A549 (cell line): ENCODE measurements at regions of chr19 and their contacts with region 1.

Region 1: DNA sequence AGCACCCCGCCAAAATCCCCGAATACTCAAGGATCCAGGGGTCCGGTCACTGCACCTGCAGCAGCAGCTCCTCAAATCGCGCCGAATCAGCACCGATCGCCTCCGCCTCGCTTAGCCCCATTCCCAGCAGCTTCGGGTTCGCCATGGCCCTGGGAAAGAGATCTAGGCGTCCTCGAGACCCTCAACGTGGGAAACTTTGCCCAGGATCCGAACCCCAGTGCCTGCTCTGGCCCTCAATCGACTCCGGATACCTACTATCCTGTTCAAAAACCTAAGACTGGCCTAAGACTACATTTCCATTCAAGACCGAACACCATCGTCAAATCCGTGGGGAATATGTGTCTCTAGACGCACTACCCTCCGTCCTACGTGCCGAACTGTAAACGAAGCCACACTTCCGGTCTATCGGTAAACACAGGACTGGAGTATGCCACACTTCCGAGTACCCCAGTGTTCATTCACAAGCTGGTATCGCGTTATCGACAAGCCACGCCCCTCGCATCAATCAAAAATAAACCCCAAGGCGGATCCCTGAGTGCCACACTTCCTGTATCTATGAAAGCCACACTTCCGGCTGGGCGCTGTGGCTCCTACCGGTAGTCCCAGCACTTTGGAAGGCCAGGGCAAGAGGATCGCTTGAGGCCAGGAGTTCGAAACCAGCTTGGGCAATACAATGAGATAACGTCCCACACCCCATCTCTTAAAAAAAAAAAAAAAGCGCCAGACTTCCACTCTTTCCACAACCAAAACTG is at the start of gene PIH1D1:
- DNase-seq: peak; percentile 99 to 100
- ATAC-seq: peak; percentile 76 to 79
- H3K4me3 ChIP-seq: peak within 1 kb of the TSS; percentile 90
- H3K27ac ChIP-seq: peak within 1 kb of the TSS; percentile 93 to 99
- H3K4me1 ChIP-seq: peaks cover 25% of the 10 kb centered on the region
- CTCF ChIP-seq: no peak
- EP300 ChIP-seq: no peak
- POLR2A ChIP-seq: peak; percentile 85
- RAD21 ChIP-seq: no peak
- polyA plus RNA-seq, gene PIH1D1: 74.1 and 89.7 TPM in 2 replicates

Region 2: DNA sequence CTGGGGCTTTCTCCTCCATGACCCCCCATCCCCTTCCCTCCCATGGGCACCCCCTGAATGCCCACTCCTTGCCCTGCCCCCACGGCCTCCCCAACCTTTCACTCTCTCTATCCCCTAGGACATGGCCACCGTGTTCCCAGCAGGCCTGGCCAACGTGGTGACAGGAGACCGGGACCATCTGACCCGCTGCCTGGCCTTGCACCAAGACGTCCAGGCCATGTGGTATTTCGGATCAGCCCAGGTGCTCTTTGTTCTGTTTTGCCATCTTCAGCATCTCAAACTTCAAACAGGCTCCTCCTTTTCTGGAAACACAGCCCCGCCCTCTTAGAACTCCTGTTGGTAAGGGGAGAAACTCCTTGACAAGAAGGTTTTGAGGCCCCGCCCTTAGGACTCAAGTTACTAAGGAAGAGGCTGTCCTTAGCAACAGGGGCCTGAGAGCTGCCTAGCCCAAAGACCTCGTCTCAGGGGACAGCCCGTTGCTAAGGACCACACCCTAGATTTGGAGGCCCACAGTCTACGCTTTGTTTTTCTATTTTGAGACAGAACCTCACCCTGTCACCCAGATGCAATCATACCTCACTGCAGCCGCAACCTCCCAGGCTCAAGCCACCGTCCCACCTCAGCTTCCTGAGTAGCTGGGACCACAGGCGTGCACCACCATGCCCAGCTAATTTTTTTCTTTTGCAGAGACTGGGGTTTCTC is 17.3 kb after region 1 on chr19:
- CTCF ChIA-PET with region 1: interaction called, 87 read pairs
- POLR2A ChIA-PET with region 1: interaction called, 11 read pairs
- DNase-seq: peak in 1 of 2 experiments; percentile 82
- ATAC-seq: peak; percentile 30 to 61; a peak in 4 of 6 replicates
- H3K4me3 ChIP-seq: no peak overlapping the region
- H3K27ac ChIP-seq: no peak overlapping the region
- H3K4me1 ChIP-seq: peaks cover 7% of the 10 kb centered on the region; the same call in 2 of the 3 replicates
- CTCF ChIP-seq: no peak
- EP300 ChIP-seq: no peak
- POLR2A ChIP-seq: no peak
- RAD21 ChIP-seq: no peak

Region 3: GRCh38 chr19:49497047-49497788 is 45.6 kb after region 1 on chr19:
- CTCF ChIA-PET with region 1: interaction called, 3 read pairs
- POLR2A ChIA-PET with region 1: interaction called, 10 read pairs
- DNase-seq: peak; percentile 77 to 79
- ATAC-seq: peak in 1 of 2 experiments; percentile 7; a peak in 2 of 6 replicates
- H3K4me3 ChIP-seq: peak overlapping the region; percentile 97
- H3K27ac ChIP-seq: peak overlapping the region; percentile 93 to 97
- H3K4me1 ChIP-seq: peaks cover 34% of the 10 kb centered on the region
- CTCF ChIP-seq: no peak
- EP300 ChIP-seq: no peak
- POLR2A ChIP-seq: peak; percentile 64
- RAD21 ChIP-seq: no peak